AG04450 (cell line): ENCODE measurements at regions of chr14 and their contacts with region 1.

Region 1: GRCh38 chr14:66359500-66359899 is 126.7 kb upstream of the CCDC196 start:
- DNase-seq: peak; percentile 50
- H3K4me3 ChIP-seq: no peak overlapping the region
- H3K27ac ChIP-seq: no peak overlapping the region
- H3K27me3 ChIP-seq: no peaks in the 10 kb centered on the region
- CTCF ChIP-seq: peak; percentile 71

Region 2: DNA sequence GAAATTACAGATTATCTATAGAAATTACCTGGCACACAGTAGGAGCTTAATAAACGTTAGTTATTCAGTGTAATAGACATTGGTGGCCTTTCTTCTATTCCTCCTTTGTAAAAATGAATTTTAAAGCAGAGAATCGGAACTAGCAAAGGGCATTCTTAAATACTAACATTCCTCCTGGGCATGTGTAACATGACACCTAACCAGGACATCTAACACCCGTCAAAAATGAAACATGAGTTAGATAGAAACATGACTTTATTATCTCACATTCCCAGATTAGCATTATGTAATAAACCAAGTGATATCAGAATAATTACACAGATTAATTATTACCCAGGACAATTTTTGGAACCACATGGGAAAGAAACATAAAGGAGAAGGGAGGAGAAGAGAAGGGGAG is 17.1 kb before region 1 on chr14:
- CTCF ChIA-PET with region 1: interaction called, 11 read pairs
- POLR2A ChIA-PET with region 1: no interaction called
- DNase-seq: no peak
- H3K4me3 ChIP-seq: no peak overlapping the region
- H3K27ac ChIP-seq: no peak overlapping the region
- H3K27me3 ChIP-seq: no peaks in the 10 kb centered on the region
- CTCF ChIP-seq: no peak

Region 3: DNA sequence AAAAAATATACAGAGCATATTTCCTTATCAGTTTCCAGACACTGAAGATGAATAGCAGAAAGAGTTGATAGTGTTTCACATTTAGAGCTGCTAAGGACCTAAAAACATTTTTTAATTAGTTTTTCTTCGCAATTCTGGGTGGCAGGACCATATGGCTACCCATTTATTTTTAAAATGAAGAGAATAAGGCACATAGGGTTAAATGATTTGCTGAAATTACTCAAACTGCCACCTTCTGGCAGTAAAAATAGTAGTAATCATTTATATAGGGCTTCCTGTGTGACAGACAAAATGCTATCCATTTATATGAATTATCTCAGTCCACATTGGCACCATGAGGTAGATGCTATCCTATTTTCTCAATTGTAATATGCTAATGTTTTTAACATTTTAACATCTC is 18.1 kb after region 1 on chr14:
- CTCF ChIA-PET with region 1: interaction called, 20 read pairs
- POLR2A ChIA-PET with region 1: no interaction called
- DNase-seq: no peak
- H3K4me3 ChIP-seq: no peak overlapping the region
- H3K27ac ChIP-seq: no peak overlapping the region
- H3K27me3 ChIP-seq: no peaks in the 10 kb centered on the region
- CTCF ChIP-seq: no peak

Region 4: GRCh38 chr14:66383257-66383656 is 23.8 kb after region 1 on chr14:
- CTCF ChIA-PET with region 1: interaction called, 15 read pairs
- POLR2A ChIA-PET with region 1: no interaction called
- DNase-seq: no peak
- H3K4me3 ChIP-seq: no peak overlapping the region
- H3K27ac ChIP-seq: no peak overlapping the region
- H3K27me3 ChIP-seq: no peaks in the 10 kb centered on the region
- CTCF ChIP-seq: no peak

Region 5: GRCh38 chr14:66403183-66403582 is 43.7 kb after region 1 on chr14:
- CTCF ChIA-PET with region 1: interaction called, 27 read pairs
- POLR2A ChIA-PET with region 1: interaction called, 3 read pairs
- DNase-seq: no peak
- H3K4me3 ChIP-seq: no peak overlapping the region
- H3K27ac ChIP-seq: no peak overlapping the region
- H3K27me3 ChIP-seq: no peaks in the 10 kb centered on the region
- CTCF ChIP-seq: peak; percentile 42

Region 6: DNA sequence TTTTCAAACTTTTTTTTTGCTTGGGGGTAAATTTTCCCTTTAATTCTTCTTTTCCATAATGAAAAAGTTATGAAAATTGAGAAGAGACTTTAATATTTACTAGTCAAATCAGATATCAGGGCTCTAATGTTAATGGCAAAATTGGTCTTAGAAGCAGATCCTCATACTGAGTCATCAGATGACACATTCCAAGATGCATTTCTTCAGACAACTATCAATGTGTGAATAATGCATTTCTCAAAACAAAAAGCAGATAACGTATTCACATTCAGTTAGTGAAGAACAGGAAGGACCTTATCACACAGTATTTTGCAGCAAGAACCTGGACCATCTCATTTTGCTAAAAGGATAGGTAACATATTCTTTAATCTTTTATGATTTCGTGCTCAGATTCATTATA is 279.2 kb after region 1 on chr14:
- CTCF ChIA-PET with region 1: interaction called, 16 read pairs
- POLR2A ChIA-PET with region 1: no interaction called
- DNase-seq: no peak
- H3K4me3 ChIP-seq: no peak overlapping the region
- H3K27ac ChIP-seq: no peak overlapping the region
- H3K27me3 ChIP-seq: no peaks in the 10 kb centered on the region
- CTCF ChIP-seq: no peak